CD8-positive, alpha-beta T cell (primary cell): ENCODE measurements at regions of chr11 and their contacts with region 1.

Region 1: DNA sequence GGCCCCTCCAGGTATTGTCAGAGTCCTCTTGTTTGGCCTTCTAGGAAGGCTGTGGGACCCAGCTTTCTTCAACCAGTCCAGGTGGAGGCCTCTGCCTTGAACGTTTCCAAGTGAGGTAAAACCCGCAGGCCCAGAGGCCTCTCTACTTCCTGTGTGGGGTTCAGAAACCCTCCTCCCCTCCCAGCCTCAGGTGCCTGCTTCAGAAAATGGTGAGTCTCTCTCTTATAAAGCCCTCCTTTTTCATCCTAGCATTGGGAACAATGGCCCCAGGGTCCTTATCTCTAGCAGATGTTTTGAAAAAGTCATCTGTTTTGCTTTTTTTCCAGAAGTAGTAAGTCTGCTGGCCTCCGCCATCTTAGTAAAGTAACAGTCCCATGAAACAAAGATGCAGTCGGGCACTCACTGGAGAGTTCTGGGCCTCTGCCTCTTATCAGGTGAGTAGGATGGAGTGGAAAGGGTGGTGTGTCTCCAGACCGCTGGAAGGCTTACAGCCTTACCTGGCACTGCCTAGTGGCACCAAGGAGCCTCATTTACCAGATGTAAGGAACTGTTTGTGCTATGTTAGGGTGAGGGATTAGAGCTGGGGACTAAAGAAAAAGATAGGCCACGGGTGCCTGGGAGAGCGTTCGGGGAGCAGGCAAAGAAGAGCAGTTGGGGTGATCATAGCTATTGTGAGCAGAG is at the start of gene CD3E:
- DNase-seq: peak; percentile 29 to 85 (median 73)
- ATAC-seq: peak; percentile 68
- H3K4me3 ChIP-seq: peak within 1 kb of the TSS; percentile 83 to 90
- H3K4me3 Mint-ChIP-seq: peak within 1 kb of the TSS; percentile 99
- H3K27ac ChIP-seq: peak within 1 kb of the TSS; percentile 76 to 86
- H3K27ac Mint-ChIP-seq: peak within 1 kb of the TSS; percentile 100
- H3K4me1 ChIP-seq: peaks cover 54% of the 10 kb centered on the region
- H3K4me1 Mint-ChIP-seq: peaks cover 82% of the 10 kb centered on the region
- H3K27me3 ChIP-seq: no peaks in the 10 kb centered on the region
- H3K27me3 Mint-ChIP-seq: no peaks in the 10 kb centered on the region
- CTCF ChIP-seq: no peak
- total RNA-seq, gene CD3E: 413 to 436 TPM

Region 2: DNA sequence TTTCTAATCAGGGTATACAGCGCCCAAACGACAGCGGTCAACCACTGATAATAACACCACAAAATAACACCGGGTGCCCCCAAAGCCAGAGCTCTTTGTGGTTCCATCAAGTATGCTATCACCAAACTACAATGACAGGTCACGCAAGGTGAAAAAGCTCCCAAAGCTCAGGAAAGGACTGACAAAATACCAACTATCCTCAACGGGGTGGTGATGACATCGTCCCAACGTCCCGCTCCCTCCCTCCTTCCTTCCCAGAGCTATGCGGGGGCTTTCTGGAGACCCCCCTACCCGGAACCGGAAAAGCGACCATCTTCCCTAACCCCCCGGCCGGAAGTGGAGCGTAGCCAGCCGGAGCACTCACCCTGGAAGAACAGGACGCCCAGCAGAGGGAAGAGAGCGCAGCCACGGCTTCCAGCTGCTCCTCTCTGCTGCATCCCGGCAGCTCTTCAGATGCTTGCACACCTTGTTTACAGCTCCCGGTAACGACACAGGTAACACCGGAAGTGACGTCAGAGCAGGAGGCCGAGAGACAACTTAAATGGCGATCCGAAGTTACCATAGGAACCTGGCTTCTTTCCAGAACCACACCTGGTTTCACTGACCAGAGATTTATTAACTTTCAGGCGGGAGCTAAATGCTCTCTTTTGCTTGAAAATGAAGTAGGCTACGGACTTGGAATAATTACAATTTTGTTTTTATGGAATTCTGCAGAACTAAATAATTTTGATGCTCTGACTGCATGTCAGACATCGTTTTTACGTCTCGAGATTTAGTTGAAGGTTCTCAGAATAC is 52.7 kb before region 1 on chr11 and contains the start of gene MPZL3:
- CTCF ChIA-PET with region 1: no interaction called
- POLR2A ChIA-PET with region 1: interaction called, 14 read pairs
- intact Hi-C with region 1: loop called (anchors 5 kb)
- DNase-seq: peak; percentile 74 to 96 (median 87)
- ATAC-seq: peak; percentile 75
- H3K4me3 ChIP-seq: peak within 1 kb of the TSS; percentile 67 to 94
- H3K4me3 Mint-ChIP-seq: peak within 1 kb of the TSS; percentile 98
- H3K27ac ChIP-seq: peak within 1 kb of the TSS; percentile 93 to 97
- H3K27ac Mint-ChIP-seq: peak within 1 kb of the TSS; percentile 100
- H3K4me1 ChIP-seq: peaks cover 8% of the 10 kb centered on the region
- H3K4me1 Mint-ChIP-seq: peaks cover 41% of the 10 kb centered on the region
- H3K27me3 ChIP-seq: no peaks in the 10 kb centered on the region
- H3K27me3 Mint-ChIP-seq: no peaks in the 10 kb centered on the region
- CTCF ChIP-seq: no peak
- total RNA-seq, gene MPZL3: 15.3 to 16.8 TPM

Region 3: GRCh38 chr11:118338637-118339061 is 33.9 kb after region 1 on chr11:
- CTCF ChIA-PET with region 1: no interaction called
- POLR2A ChIA-PET with region 1: interaction called, 336 read pairs
- intact Hi-C with region 1: loop called in 1 of 2 experiments (anchors 1 kb)
- DNase-seq: peak; percentile 67 to 97 (median 91)
- ATAC-seq: peak; percentile 63
- H3K4me3 ChIP-seq: peak overlapping the region; percentile 87 to 92
- H3K4me3 Mint-ChIP-seq: peak overlapping the region; percentile 93
- H3K27ac ChIP-seq: peak overlapping the region; percentile 72 to 94
- H3K27ac Mint-ChIP-seq: peak overlapping the region; percentile 99
- H3K4me1 ChIP-seq: peaks cover 64% of the 10 kb centered on the region
- H3K4me1 Mint-ChIP-seq: peaks cover 74% of the 10 kb centered on the region
- H3K27me3 ChIP-seq: no peaks in the 10 kb centered on the region
- H3K27me3 Mint-ChIP-seq: no peaks in the 10 kb centered on the region
- CTCF ChIP-seq: no peak

Region 4: GRCh38 chr11:118353084-118353710 is 48.5 kb after region 1 on chr11:
- CTCF ChIA-PET with region 1: no interaction called
- POLR2A ChIA-PET with region 1: interaction called, 336 read pairs
- intact Hi-C with region 1: loop called in 1 of 2 experiments (anchors 2 kb)
- DNase-seq: peak in 2 of 9 experiments; percentile 68 to 79
- ATAC-seq: peak; percentile 35
- H3K4me3 ChIP-seq: no peak overlapping the region
- H3K4me3 Mint-ChIP-seq: peak overlapping the region; percentile 43
- H3K27ac ChIP-seq: peak overlapping the region; percentile 13 to 56
- H3K27ac Mint-ChIP-seq: peak overlapping the region; percentile 92
- H3K4me1 ChIP-seq: peaks cover 29% of the 10 kb centered on the region
- H3K4me1 Mint-ChIP-seq: peaks cover 42% of the 10 kb centered on the region
- H3K27me3 ChIP-seq: no peaks in the 10 kb centered on the region
- H3K27me3 Mint-ChIP-seq: no peaks in the 10 kb centered on the region
- CTCF ChIP-seq: peak; percentile 82

Region 5: DNA sequence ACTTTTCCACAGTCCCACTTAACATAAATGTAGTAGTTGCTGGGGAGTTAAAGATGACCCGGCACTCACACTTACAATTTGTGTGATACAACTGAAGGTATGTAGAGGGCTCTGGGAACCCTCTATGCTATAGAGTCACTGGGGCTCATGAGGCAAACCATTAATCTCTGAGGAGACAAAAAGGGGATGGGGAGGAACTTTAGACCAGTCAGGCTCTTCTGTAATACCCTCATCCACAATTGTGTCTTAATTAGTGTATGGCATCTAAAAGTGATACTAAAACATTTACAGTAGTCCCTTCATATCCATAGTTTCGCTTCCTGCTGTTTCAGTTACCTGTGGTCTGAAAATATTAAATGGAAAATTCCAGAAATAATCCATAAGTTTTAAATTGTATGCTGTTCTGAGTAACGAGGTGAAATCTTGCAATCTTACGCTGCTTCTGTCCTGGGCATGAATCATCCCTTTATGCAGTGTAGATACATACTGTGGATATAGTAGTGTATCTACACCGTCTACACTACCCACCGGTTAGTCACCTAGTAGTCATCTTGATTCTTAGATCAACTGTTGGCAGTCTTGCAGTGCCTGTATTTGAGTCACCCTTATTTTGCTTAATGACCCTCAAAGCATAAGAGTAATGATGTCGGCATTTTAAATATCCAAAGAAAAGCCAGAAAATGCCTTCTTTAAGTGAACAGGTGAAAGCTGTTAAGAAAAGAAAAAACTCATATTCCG is 913.6 kb after region 1 on chr11:
- CTCF ChIA-PET with region 1: no interaction called
- POLR2A ChIA-PET with region 1: no interaction called
- intact Hi-C with region 1: no loop called
- DNase-seq: no peak
- ATAC-seq: peak; percentile 40
- H3K4me3 ChIP-seq: no peak overlapping the region
- H3K4me3 Mint-ChIP-seq: no peak overlapping the region
- H3K27ac ChIP-seq: no peak overlapping the region
- H3K27ac Mint-ChIP-seq: peak overlapping the region; percentile 6
- H3K4me1 ChIP-seq: peaks cover 16% of the 10 kb centered on the region
- H3K4me1 Mint-ChIP-seq: peaks cover 52% of the 10 kb centered on the region
- H3K27me3 ChIP-seq: no peaks in the 10 kb centered on the region
- H3K27me3 Mint-ChIP-seq: no peaks in the 10 kb centered on the region
- CTCF ChIP-seq: no peak